Heart left ventricle (tissue), 16 donors: ENCODE measurements at regions of chr21 and their contacts with region 1.

Region 1: GRCh38 chr21:25607151-25608043 is at the start of gene MRPL39:
- DNase-seq: peak; percentile 87 to 94 (median 90)
- ATAC-seq: peak; percentile 92 to 99 (median 98)
- H3K4me3 ChIP-seq: peak within 1 kb of the TSS; percentile 60 to 92 (median 80)
- H3K27ac ChIP-seq: peak within 1 kb of the TSS; percentile 24 to 91 (median 84)
- H3K4me1 ChIP-seq: peaks cover 0 to 32% (median 20%) of the 10 kb centered on the region in 12 donors
- H3K27me3 ChIP-seq: no peaks in the 10 kb centered on the region
- CTCF ChIP-seq: peak; percentile 36 to 71 (median 54)
- POLR2A ChIP-seq: peak in 1 of 2 donors; percentile 48
- total RNA-seq, gene MRPL39: 37.6 to 54.5 (median 47.0) TPM

Region 2: GRCh38 chr21:25639551-25640201 is 32.3 kb after region 1 on chr21:
- intact Hi-C with region 1: loop called in 6 of 10 experiments (anchors 1 to 2 kb)
- DNase-seq: peak; percentile 53 to 76 (median 60)
- ATAC-seq: peak; percentile 47 to 88 (median 80)
- H3K4me3 ChIP-seq: peak overlapping the region; percentile 67 to 94 (median 78)
- H3K27ac ChIP-seq: peak overlapping the region; percentile 77 to 93 (median 86)
- H3K4me1 ChIP-seq: peaks cover 0 to 24% (median 18%) of the 10 kb centered on the region in 12 donors
- H3K27me3 ChIP-seq: no peaks in the 10 kb centered on the region
- CTCF ChIP-seq: peak in 11 of 12 donors; percentile 12 to 62 (median 47)
- POLR2A ChIP-seq: no peak

Region 3: GRCh38 chr21:25708467-25709065 is 101.2 kb after region 1 on chr21:
- intact Hi-C with region 1: loop called (anchors 1 to 5 kb)
- DNase-seq: peak in 2 of 5 donors; percentile 37 to 39
- ATAC-seq: no peak
- H3K4me3 ChIP-seq: no peak overlapping the region
- H3K27ac ChIP-seq: peak overlapping the region in 1 of 12 donors; percentile 4
- H3K4me1 ChIP-seq: peaks cover 0 to 14% (median 3%) of the 10 kb centered on the region in 12 donors
- H3K27me3 ChIP-seq: no peaks in the 10 kb centered on the region
- CTCF ChIP-seq: peak; percentile 72 to 94 (median 88)
- POLR2A ChIP-seq: no peak

Region 4: DNA sequence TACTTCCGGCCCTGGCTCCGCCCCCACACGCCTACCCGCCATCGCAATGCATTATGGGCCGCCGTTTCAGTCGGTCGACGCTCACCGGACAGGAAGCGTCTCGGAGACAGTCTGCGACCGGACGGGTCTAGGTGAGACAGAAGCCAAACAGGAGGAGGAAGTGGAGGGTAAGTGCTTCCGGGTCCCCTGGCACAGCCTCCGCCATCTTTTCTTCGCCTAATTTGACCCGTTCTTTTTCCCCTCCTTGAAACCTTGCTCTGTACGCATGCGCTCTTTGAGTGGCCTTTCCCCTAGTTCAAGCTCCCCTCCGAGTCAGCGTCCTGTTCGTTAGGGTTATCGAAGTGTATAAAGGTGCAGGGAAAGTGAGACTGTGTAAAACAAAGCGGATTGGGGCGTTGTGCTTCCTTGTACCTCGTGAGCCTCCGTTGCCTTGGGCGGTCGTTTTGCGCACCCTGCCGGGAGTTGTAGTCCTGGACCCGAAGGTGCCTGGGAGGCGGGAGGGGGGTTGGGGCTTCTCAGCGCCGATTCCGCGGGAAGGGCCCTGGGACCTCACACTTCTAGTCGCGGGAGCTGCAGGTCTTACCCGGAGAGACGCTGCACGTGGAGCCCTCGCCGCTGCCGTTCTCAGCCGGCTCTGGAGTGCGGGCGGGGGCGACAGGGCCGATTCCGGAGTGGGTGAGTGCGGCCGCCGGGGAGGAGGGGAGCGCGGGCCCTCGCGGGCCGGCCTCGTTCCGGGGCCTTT is 127.7 kb after region 1 on chr21 and contains the starts of genes ATP5PF and GABPA:
- intact Hi-C with region 1: loop called in 4 of 10 experiments (anchors 1 to 10 kb)
- DNase-seq: peak; percentile 98
- ATAC-seq: peak; percentile 93 to 97 (median 96)
- H3K4me3 ChIP-seq: peak within 1 kb of the TSS; percentile 69 to 98 (median 92)
- H3K27ac ChIP-seq: peak within 1 kb of the TSS; percentile 93 to 100 (median 99)
- H3K4me1 ChIP-seq: peaks cover 6 to 62% (median 54%) of the 10 kb centered on the region in 12 donors
- H3K27me3 ChIP-seq: no peaks in the 10 kb centered on the region
- CTCF ChIP-seq: peak in 4 of 12 donors; percentile 11 to 43 (median 22)
- POLR2A ChIP-seq: no peak
- total RNA-seq, gene ATP5PF: 479 to 989 (median 653) TPM
- total RNA-seq, gene GABPA: 9.0 to 20.6 (median 15.6) TPM

Region 5: DNA sequence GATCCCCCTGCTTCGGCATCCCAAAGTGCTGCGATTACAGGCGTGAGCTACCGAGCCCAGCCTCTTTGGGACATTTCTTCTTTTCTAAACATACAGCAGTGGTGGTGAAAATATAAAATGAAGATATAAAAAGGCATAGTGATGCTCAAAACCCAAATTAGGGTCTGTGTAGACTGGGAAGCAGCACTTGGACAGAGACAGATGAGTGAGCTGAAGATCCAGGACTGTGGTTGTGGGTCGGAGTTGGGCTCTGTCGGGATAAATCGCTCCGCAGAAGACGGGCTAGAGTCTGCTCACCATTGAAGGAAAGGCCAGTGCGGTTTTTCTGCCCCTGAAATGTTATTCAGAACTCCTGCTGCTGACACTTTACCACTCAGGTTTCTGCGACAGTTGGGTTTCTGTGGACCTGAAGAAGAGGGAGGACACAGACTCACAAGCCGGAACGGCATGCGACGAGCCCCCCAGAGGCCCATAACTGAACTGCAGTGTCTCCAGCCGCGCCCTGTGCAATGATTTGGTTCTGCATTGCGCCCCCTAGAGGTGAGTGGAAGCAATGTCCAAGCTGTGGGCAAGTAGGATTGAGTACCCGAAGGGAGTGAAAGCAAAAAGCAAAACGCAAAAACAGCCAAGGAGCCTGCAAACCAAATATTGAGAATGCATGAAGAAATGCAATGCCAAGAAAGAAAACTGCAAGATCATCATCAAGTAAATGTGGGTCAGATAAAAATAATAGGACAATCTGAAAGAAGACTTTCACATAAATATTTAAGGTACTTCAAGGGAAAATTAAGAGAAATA is 194.0 kb after region 1 on chr21:
- intact Hi-C with region 1: loop called in 7 of 10 experiments (anchors 1 to 5 kb)
- DNase-seq: peak; percentile 77 to 87 (median 83)
- ATAC-seq: peak; percentile 80 to 97 (median 94)
- H3K4me3 ChIP-seq: no peak overlapping the region
- H3K27ac ChIP-seq: no peak overlapping the region
- H3K4me1 ChIP-seq: peaks cover 0 to 10% (median 0%) of the 10 kb centered on the region in 12 donors
- H3K27me3 ChIP-seq: peaks cover 0 to 7% (median 0%) of the 10 kb centered on the region in 9 donors
- CTCF ChIP-seq: peak; percentile 90 to 99 (median 96)
- POLR2A ChIP-seq: no peak

Region 6: GRCh38 chr21:25881525-25882376 is 274.4 kb after region 1 on chr21:
- intact Hi-C with region 1: no loop called
- DNase-seq: peak; percentile 49 to 81 (median 68)
- ATAC-seq: peak; percentile 48 to 76 (median 76)
- H3K4me3 ChIP-seq: no peak overlapping the region
- H3K27ac ChIP-seq: no peak overlapping the region
- H3K4me1 ChIP-seq: peaks cover 0 to 20% (median 4%) of the 10 kb centered on the region in 12 donors
- H3K27me3 ChIP-seq: no peaks in the 10 kb centered on the region
- CTCF ChIP-seq: peak; percentile 88 to 98 (median 94)
- POLR2A ChIP-seq: no peak

Region 7: GRCh38 chr21:26389971-26390641 is 782.7 kb after region 1 on chr21:
- intact Hi-C with region 1: no loop called
- DNase-seq: no peak
- ATAC-seq: no peak
- H3K4me3 ChIP-seq: no peak overlapping the region
- H3K27ac ChIP-seq: no peak overlapping the region
- H3K4me1 ChIP-seq: peaks cover 0 to 7% (median 0%) of the 10 kb centered on the region in 12 donors
- H3K27me3 ChIP-seq: no peaks in the 10 kb centered on the region
- CTCF ChIP-seq: no peak
- POLR2A ChIP-seq: no peak

Region 8: GRCh38 chr21:26715878-26716506 is 1108.6 kb after region 1 on chr21:
- intact Hi-C with region 1: loop called in 1 of 10 experiments (anchors 10 kb)
- DNase-seq: peak in 3 of 5 donors; percentile 31 to 41 (median 32)
- ATAC-seq: peak; percentile 52 to 83 (median 62)
- H3K4me3 ChIP-seq: no peak overlapping the region
- H3K27ac ChIP-seq: no peak overlapping the region
- H3K4me1 ChIP-seq: peaks cover 0 to 8% (median 0%) of the 10 kb centered on the region in 12 donors
- H3K27me3 ChIP-seq: no peaks in the 10 kb centered on the region
- CTCF ChIP-seq: peak; percentile 71 to 89 (median 82)
- POLR2A ChIP-seq: no peak